Activated CD8-positive, alpha-beta T cell treated with anti-CD3 and anti-CD28 coated beads for 36 hours (primary cell): ENCODE measurements at regions of chr12 and their contacts with region 1.

Region 1: GRCh38 chr12:89352492-89353187 is at the start of gene DUSP6:
- DNase-seq: peak; percentile 95
- ATAC-seq: peak; percentile 83
- H3K4me3 Mint-ChIP-seq: peak within 1 kb of the TSS; percentile 94
- H3K27ac Mint-ChIP-seq: peak within 1 kb of the TSS; percentile 93
- H3K4me1 Mint-ChIP-seq: peaks cover 35% of the 10 kb centered on the region
- H3K27me3 Mint-ChIP-seq: peaks cover 16% of the 10 kb centered on the region
- CTCF ChIP-seq: no peak
- total RNA-seq, gene DUSP6: 15.3 to 16.6 TPM

Region 2: DNA sequence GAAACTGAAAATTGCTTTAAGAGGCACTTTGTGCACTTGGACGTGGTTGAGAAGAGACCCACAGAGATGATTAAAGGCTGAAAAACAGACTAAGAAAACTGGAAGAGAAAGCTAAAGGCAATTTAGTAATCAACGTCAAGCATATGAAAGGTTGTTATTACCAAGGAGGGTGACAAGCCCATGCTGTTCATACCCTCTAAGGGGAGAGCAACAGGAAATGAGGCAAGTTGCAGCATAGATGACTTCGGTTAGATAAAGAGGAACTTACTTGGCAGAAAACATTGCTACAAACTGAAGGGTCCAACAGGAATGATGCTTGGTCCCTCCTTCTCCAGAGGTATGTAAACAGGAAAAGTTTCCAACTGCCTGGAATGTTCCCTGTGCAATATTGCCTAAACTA is 108.1 kb before region 1 on chr12:
- CTCF ChIA-PET with region 1: interaction called, 3 read pairs
- POLR2A ChIA-PET with region 1: interaction called, 10 read pairs
- intact Hi-C with region 1: no loop called
- DNase-seq: peak; percentile 45
- ATAC-seq: peak; percentile 86
- H3K4me3 Mint-ChIP-seq: peak overlapping the region; percentile 40
- H3K27ac Mint-ChIP-seq: peak overlapping the region; percentile 83
- H3K4me1 Mint-ChIP-seq: peaks cover 34% of the 10 kb centered on the region
- H3K27me3 Mint-ChIP-seq: peaks cover 3% of the 10 kb centered on the region
- CTCF ChIP-seq: no peak

Region 3: DNA sequence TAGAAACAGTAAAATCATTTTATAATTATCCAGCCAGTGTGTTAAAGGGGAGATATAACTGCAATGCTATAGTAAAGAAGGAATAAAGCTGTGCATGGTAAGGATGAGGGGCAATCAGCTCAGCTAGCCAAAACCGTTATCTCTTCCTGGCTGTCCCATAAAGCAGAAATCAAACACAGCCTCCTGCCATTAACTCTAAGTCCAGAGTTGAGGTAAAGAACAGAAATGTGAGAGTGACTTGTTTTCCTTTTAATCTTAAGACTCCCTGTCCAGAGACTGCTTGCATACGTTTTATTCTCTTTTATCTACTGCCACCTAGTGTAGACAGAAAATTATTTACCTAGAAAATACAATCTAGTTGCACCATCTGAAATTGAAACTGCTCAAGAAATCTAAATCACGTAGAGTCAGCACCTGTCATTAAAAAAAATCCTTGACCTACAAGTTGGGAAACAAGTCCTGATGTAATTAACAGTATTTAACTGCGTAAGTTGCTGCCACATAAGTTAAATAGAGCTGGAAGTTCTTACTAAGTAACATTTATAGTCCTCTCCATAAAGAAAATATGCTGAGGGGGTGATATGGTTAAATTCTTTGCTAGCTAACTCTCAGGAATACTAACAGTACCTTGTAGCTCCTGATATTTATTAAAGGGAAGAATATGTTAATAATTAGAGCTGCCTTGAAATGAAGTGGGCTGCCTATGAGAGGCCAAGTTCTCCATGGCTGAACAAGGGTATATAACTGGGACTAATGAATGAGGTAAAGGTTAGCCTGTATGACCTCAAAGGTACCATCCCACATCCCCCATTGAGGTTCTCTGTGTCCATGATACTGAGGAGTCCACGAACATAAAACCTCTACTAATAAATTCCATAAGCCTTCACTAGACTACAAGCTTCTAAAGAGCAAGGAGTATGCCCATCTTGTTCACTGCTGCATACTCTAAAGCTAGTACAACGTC is 109.3 kb after region 1 on chr12:
- CTCF ChIA-PET with region 1: interaction called, 14 read pairs
- POLR2A ChIA-PET with region 1: interaction called, 4 read pairs
- intact Hi-C with region 1: loop called (anchors 5 kb)
- DNase-seq: no peak
- ATAC-seq: peak; percentile 91
- H3K4me3 Mint-ChIP-seq: peak overlapping the region; percentile 46
- H3K27ac Mint-ChIP-seq: peak overlapping the region; percentile 79
- H3K4me1 Mint-ChIP-seq: peaks cover 32% of the 10 kb centered on the region
- H3K27me3 Mint-ChIP-seq: no peaks in the 10 kb centered on the region
- CTCF ChIP-seq: peak; percentile 76

Region 4: GRCh38 chr12:89524541-89525285 is 172.1 kb after region 1 on chr12 and contains the start of gene GALNT4:
- CTCF ChIA-PET with region 1: interaction called, 3 read pairs
- POLR2A ChIA-PET with region 1: interaction called, 3 read pairs
- intact Hi-C with region 1: loop called (anchors 5 kb)
- DNase-seq: peak; percentile 80
- ATAC-seq: peak; percentile 59
- H3K4me3 Mint-ChIP-seq: peak within 1 kb of the TSS; percentile 98
- H3K27ac Mint-ChIP-seq: peak within 1 kb of the TSS; percentile 99
- H3K4me1 Mint-ChIP-seq: peaks cover 58% of the 10 kb centered on the region
- H3K27me3 Mint-ChIP-seq: no peaks in the 10 kb centered on the region
- CTCF ChIP-seq: peak; percentile 65
- total RNA-seq, gene GALNT4: 5.9 to 6.4 TPM